ENCODE measurements at regions of chr1 and their contacts with region 1.

Region 1: DNA sequence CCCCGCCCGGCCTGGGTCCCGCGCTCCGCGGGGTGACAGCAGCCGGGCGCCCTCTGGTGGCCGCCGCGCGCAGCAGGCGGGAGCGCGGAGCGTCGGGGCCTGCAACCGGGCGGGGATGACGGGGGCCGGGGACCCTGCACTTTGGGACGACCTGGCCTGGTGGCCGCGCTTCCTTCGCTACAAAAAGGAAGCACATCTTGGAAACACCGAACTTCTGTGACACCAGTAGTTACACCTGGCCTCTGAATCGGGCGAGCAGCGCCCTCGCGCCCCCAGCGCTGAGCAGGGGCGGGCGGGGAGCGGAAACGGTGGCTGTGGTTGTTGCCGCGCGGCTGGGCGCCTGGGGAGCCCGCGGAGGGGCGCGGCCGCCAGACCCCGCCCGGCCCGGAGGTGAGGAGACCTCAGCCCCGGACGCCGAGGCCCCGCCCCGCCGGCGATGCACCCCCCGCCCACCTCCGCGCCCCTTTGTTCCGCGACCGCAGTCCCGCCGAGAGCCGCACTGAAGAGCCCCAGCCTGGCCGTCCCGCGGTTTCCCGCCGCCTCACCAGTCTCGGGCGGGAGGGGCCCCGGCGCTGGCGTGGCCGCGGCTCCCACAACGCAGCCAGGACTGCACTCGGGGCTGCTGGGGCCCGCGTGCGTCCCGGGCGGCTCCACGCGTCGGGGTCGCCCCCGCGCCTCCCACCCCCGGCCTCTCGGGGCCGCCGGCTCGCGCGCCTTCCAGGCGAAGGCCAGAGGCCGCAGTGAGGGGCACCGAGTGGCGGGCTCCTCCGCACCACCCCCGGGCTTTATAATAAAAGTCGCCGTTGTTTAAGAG is 59.3 kb downstream of the H3-3A start:
- DNase-seq: peak; percentile 94
- H3K4me3 Mint-ChIP-seq: peak overlapping the region; percentile 80
- H3K27ac Mint-ChIP-seq: peak overlapping the region; percentile 75
- H3K4me1 Mint-ChIP-seq: peaks cover 22% of the 10 kb centered on the region
- H3K27me3 Mint-ChIP-seq: peaks cover 3% of the 10 kb centered on the region

Region 2: GRCh38 chr1:226083302-226084101 is 38.3 kb before region 1 on chr1:
- intact Hi-C with region 1: loop called (anchors 5 kb)
- DNase-seq: peak; percentile 99
- H3K4me3 Mint-ChIP-seq: peak overlapping the region; percentile 97
- H3K27ac Mint-ChIP-seq: peak overlapping the region; percentile 90
- H3K4me1 Mint-ChIP-seq: peaks cover 8% of the 10 kb centered on the region
- H3K27me3 Mint-ChIP-seq: peaks cover 6% of the 10 kb centered on the region

Region 3: DNA sequence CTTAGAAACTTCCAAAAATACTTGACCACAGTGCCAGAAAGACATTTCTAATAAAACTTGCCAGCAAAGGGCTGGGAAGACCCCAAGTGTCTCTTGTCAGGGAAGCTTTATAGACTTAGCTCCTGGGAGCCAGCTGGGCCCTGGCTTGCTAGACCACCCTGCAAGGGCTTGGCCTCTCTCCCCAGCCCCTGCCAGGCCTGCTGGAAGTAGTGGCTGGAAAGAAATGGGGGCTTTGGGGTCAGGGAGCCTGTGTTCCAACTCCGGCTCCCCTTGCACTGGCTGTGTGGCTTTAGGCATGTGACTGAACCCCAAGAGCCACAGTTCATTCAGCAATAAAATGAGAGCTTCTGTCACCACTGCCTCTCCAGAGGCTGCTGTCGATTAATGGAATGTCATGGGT is 28.2 kb before region 1 on chr1:
- intact Hi-C with region 1: no loop called
- DNase-seq: no peak
- H3K4me3 Mint-ChIP-seq: no peak overlapping the region
- H3K27ac Mint-ChIP-seq: no peak overlapping the region
- H3K4me1 Mint-ChIP-seq: no peaks in the 10 kb centered on the region
- H3K27me3 Mint-ChIP-seq: peaks cover 26% of the 10 kb centered on the region

Region 4: GRCh38 chr1:226109829-226110248 is 12.0 kb before region 1 on chr1:
- intact Hi-C with region 1: loop called (anchors 1 kb)
- DNase-seq: peak; percentile 95
- H3K4me3 Mint-ChIP-seq: peak overlapping the region; percentile 89
- H3K27ac Mint-ChIP-seq: peak overlapping the region; percentile 80
- H3K4me1 Mint-ChIP-seq: peaks cover 24% of the 10 kb centered on the region
- H3K27me3 Mint-ChIP-seq: peaks cover 8% of the 10 kb centered on the region

Region 5: DNA sequence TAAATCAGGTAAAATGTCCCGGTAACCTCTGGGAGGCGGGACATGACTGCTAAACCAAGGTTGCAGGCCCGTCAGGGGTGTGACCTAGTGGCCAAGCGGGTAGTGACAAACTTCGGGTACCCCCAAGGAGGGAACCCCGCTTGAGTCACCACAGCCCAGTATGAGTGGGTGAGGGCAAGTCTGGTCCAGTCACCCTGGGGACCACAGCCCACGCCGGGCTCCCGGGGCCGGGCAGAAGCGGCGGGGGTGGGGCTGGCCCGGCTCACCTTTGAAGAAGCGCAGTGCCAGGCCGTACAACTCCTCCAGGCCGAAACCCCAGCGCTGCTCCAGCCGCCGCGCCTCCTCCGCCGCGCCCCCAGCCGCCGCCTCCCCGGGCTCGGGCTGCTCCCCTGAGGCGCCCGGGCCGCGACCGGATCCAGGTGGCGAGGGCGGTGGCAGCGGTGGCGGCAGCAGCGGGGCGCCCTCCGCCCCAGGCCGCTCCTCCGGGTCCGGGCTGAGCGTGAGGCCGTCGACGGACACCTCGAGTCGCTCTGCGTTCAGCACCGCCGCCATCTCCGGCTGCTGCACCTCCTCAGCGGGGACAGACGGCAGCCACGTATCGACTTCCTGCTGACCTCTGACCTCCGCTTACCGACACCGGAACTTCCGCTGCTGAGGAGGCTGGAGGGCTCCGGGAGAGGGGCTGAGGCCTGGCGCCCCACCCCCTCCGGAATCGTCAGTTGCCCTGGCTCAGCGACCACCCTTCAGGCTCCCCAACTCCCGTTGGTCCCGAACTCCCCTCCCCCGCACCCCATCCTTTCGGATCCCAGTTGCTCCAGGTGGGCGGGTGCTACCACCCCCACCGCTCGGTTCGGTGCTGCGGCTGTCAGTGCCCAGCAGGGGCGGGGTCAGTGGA is 64.6 kb after region 1 on chr1 and contains the start of gene ACBD3:
- intact Hi-C with region 1: loop called (anchors 1 kb)
- DNase-seq: peak; percentile 96
- H3K4me3 Mint-ChIP-seq: peak within 1 kb of the TSS; percentile 97
- H3K27ac Mint-ChIP-seq: peak within 1 kb of the TSS; percentile 92
- H3K4me1 Mint-ChIP-seq: peaks cover 29% of the 10 kb centered on the region
- H3K27me3 Mint-ChIP-seq: no peaks in the 10 kb centered on the region
- total RNA-seq, gene ACBD3: 21.8 and 23.9 TPM in 2 replicates

Region 6: GRCh38 chr1:226201029-226201593 is 79.3 kb after region 1 on chr1:
- intact Hi-C with region 1: loop called (anchors 1 kb)
- DNase-seq: peak; percentile 59
- H3K4me3 Mint-ChIP-seq: no peak overlapping the region
- H3K27ac Mint-ChIP-seq: no peak overlapping the region
- H3K4me1 Mint-ChIP-seq: peaks cover 2% of the 10 kb centered on the region
- H3K27me3 Mint-ChIP-seq: peaks cover 14% of the 10 kb centered on the region

Region 7: GRCh38 chr1:226293553-226293920 is 171.7 kb after region 1 on chr1:
- intact Hi-C with region 1: no loop called
- DNase-seq: no peak
- H3K4me3 Mint-ChIP-seq: no peak overlapping the region
- H3K27ac Mint-ChIP-seq: no peak overlapping the region
- H3K4me1 Mint-ChIP-seq: no peaks in the 10 kb centered on the region
- H3K27me3 Mint-ChIP-seq: no peaks in the 10 kb centered on the region

Region 8: DNA sequence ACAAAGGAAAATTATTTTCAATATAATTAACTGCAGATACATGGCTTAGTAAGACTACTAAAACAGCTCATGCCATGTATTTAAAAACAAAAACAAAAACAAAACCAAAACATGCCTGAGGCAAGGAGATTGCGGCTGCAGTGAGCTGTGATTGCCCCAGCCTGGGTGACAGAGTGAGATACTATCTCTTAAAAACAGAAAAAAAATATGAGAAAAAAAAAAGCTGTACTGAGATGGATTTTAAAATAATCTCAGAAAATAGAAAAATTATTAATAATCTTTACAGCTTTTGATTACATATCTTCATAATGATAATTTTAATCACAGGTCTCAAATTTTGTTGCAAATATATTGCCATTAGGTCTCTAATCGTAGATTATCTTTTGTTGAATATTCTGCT is 211.2 kb after region 1 on chr1:
- intact Hi-C with region 1: loop called (anchors 1 kb)
- DNase-seq: peak; percentile 71
- H3K4me3 Mint-ChIP-seq: peak overlapping the region; percentile 48
- H3K27ac Mint-ChIP-seq: no peak overlapping the region
- H3K4me1 Mint-ChIP-seq: peaks cover 8% of the 10 kb centered on the region
- H3K27me3 Mint-ChIP-seq: no peaks in the 10 kb centered on the region

Region 9: GRCh38 chr1:226476648-226477319 is 355.0 kb after region 1 on chr1:
- intact Hi-C with region 1: no loop called
- DNase-seq: no peak
- H3K4me3 Mint-ChIP-seq: no peak overlapping the region
- H3K27ac Mint-ChIP-seq: no peak overlapping the region
- H3K4me1 Mint-ChIP-seq: peaks cover 2% of the 10 kb centered on the region
- H3K27me3 Mint-ChIP-seq: peaks cover 16% of the 10 kb centered on the region

Region 10: DNA sequence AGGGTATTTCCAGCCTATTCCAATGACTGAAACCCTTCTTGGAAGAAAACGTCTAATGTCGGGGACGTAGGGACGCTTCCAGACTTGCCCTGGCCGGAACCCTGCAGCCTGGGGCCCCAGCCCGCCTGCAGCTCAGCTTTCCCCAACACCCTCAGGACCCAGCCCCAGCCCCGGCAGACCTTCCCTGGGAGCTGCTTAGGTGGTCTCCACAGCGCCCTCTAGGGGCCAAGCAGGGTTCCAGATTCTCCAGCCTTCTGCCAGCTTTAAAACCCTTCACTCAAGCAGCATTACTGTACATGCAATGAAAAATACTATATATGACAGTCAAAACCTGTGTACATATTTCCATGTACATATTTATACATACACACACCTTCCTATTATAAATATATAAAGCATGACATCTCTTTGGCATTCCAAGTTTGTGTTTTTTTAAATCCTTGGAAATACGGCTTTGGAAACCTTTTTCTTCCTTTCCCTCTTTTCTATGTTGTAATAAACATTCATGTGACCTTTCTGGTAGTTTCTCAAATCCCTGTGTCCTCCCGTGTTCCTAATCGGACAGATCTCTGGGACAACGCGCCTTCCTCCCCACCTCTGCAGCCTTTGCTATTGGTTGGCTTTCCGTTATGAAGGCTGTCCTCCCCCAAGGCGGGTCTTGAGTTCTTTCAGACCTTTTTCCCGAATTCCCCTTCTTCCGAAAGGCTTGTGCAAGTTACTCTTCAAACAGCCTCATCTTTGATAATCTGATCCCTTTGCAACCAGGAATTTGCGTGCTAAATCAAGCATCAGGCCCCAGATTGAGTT is 487.1 kb after region 1 on chr1:
- intact Hi-C with region 1: loop called (anchors 10 kb)
- DNase-seq: peak; percentile 87
- H3K4me3 Mint-ChIP-seq: no peak overlapping the region
- H3K27ac Mint-ChIP-seq: no peak overlapping the region
- H3K4me1 Mint-ChIP-seq: no peaks in the 10 kb centered on the region
- H3K27me3 Mint-ChIP-seq: peaks cover 12% of the 10 kb centered on the region